Right ventricle myocardium inferior (tissue), 1 donor: ENCODE measurements at regions of chr1 and their contacts with region 1.

Region 1: GRCh38 chr1:188489713-188490112 is 1661.0 kb downstream of the PLA2G4A start:
- DNase-seq: no peak
- ATAC-seq: no peak

Region 2: DNA sequence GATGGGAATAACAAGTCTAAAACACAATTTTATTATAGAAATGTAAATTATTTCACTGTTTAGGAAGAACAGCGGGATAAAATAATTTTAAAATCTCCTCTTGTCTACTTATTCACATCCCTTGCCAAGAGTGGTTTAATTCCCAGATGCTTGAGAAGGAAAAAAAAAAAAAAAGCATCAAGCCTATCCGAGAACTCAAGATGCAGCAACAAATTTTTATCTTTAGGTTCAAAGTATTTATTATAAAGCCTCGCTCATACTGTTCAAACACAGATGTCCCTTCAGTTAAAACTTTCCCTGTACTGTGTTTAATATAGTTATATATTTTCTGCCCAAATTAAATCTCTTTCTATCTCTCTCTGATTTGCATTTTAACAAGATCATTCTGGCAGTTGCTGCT is 45.2 kb before region 1 on chr1:
- intact Hi-C with region 1: no loop called
- DNase-seq: no peak
- ATAC-seq: no peak

Region 3: DNA sequence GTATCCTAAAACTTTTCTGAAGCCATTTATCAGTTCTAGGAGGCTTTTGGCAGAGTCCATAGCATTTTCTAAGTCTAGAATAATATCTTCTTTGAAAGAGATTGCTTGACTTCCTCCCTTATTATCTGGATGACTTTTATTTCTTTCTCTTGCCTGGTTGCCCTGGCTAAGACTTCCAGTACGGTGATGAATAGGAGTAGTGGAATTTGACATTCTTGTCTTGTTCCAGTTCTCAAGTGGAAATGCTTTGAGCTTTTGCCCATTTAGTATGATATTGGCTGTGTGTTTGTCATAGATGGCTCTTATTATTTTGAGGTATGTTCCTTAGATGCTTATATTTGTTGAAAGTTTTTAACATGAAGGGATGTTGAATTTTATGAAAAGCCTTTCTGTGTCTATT is 13.1 kb before region 1 on chr1:
- intact Hi-C with region 1: loop called (anchors 1 kb)
- DNase-seq: no peak
- ATAC-seq: no peak